Activated B cell treated with CpG ODN at 0.5 μM for 24 hours (primary cell): ENCODE measurements at regions of chr1 and their contacts with region 1.

Region 1: GRCh38 chr1:152347116-152347728 is 12.6 kb downstream of the FLG2 start:
- DNase-seq: no peak
- ATAC-seq: peak; percentile 47
- H3K4me3 Mint-ChIP-seq: no peak overlapping the region
- H3K27ac Mint-ChIP-seq: no peak overlapping the region
- H3K4me1 Mint-ChIP-seq: no peaks in the 10 kb centered on the region
- H3K27me3 Mint-ChIP-seq: no peaks in the 10 kb centered on the region
- CTCF ChIP-seq: peak; percentile 93

Region 2: DNA sequence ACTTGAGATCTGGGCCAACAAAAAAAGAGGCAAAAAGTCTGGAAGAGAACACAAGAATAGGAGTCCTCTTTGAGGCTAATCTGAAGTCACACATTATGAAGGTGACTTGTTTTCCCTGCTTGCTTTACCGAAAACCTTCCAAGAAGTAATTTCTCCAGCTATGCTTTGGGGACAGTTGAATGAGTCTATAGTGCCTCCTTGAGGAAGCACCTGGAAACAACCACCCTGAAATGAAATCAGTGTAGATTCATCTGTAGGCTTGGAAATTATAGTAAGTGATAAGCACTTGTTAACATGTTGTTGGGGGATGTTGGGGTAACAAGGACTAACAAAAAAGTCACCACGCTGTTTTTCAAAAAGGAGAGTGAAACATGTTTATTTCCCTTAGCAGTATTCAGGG is 164.8 kb before region 1 on chr1:
- CTCF ChIA-PET with region 1: no interaction called
- POLR2A ChIA-PET with region 1: no interaction called
- intact Hi-C with region 1: no loop called
- DNase-seq: no peak
- ATAC-seq: no peak
- H3K4me3 Mint-ChIP-seq: no peak overlapping the region
- H3K27ac Mint-ChIP-seq: no peak overlapping the region
- H3K4me1 Mint-ChIP-seq: no peaks in the 10 kb centered on the region
- H3K27me3 Mint-ChIP-seq: peaks cover 16% of the 10 kb centered on the region
- CTCF ChIP-seq: no peak

Region 3: DNA sequence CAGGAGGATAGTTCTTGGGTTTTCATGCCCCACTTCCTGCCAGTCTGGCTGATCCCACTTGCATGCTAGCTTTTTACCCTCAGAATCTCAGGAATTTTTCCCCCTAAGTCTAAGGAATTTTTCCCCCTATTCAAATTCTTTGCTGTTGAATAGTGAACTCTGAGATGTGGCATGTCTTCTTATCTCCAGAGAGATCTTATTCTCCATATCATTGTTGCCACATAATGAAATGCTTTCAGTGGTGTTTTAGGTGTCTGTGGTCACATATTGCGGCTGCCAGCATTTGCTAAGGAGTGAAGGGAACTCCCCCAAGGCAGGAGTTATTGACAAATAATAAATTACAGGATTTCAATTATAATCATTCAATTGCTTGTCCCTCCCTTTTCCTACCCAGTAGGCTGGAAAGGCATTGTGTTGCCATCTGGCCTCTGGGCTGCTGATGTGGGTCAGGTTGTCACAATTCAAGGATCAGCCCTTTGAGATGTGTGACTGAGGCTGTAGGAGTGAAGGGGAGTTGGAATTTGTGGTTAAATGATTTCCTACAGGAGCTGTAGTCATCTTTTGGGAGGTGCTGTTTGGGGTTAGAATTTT is 18.3 kb before region 1 on chr1:
- CTCF ChIA-PET with region 1: no interaction called
- POLR2A ChIA-PET with region 1: no interaction called
- intact Hi-C with region 1: no loop called
- DNase-seq: no peak
- ATAC-seq: no peak
- H3K4me3 Mint-ChIP-seq: no peak overlapping the region
- H3K27ac Mint-ChIP-seq: no peak overlapping the region
- H3K4me1 Mint-ChIP-seq: no peaks in the 10 kb centered on the region
- H3K27me3 Mint-ChIP-seq: no peaks in the 10 kb centered on the region
- CTCF ChIP-seq: no peak

Region 4: DNA sequence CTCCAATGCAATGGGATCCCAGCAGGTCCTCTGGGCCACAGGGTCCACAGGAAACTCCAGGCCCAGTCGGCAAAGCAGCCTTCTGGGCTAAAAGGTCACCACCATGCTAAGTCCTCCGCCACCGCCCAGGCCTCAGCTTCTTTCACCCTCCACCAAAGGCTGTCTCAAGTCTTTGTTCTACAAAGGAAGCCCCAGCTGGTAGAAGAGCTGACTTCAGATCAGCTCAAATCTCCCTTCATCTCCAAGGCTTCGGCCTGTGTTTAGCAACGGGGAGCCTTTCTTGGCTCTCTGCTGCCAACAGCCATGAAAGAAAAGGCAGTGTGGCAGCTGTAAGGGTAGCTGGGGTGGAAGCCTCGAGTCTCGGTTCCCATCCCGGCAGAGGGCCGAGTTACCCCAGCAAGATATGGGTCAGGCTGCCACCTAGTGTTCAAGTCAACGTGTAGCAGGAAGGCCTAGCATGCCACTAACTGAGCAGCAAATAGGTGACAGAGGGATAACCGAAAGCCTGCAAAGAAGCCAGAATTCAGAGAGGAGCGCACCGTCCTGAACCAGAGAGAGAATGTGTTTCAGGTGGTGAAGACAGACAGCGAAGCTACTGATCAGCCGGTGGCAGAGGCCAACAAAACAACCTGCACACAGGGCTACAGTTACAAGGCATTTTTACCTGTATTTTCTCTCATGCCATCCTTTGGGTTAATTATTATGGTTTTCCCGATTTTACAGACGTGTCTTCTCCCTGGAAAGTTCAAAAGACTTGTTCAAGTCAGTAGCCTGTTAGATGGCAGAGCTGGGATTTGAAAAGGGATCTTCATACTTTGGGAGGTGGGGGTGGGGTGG is 93.6 kb after region 1 on chr1:
- CTCF ChIA-PET with region 1: no interaction called
- POLR2A ChIA-PET with region 1: no interaction called
- intact Hi-C with region 1: loop called (anchors 1 kb)
- DNase-seq: peak; percentile 37
- ATAC-seq: peak; percentile 99
- H3K4me3 Mint-ChIP-seq: no peak overlapping the region
- H3K27ac Mint-ChIP-seq: no peak overlapping the region
- H3K4me1 Mint-ChIP-seq: no peaks in the 10 kb centered on the region
- H3K27me3 Mint-ChIP-seq: peaks cover 26% of the 10 kb centered on the region
- CTCF ChIP-seq: no peak

Region 5: GRCh38 chr1:154240294-154240831 is 1893.1 kb after region 1 on chr1:
- CTCF ChIA-PET with region 1: no interaction called
- POLR2A ChIA-PET with region 1: no interaction called
- intact Hi-C with region 1: no loop called
- DNase-seq: no peak
- ATAC-seq: no peak
- H3K4me3 Mint-ChIP-seq: no peak overlapping the region
- H3K27ac Mint-ChIP-seq: no peak overlapping the region
- H3K4me1 Mint-ChIP-seq: peaks cover 3% of the 10 kb centered on the region
- H3K27me3 Mint-ChIP-seq: no peaks in the 10 kb centered on the region
- CTCF ChIP-seq: no peak